CD8-positive, alpha-beta memory T cell (primary cell): ENCODE measurements at regions of chr15 and their contacts with region 1.

Region 1: DNA sequence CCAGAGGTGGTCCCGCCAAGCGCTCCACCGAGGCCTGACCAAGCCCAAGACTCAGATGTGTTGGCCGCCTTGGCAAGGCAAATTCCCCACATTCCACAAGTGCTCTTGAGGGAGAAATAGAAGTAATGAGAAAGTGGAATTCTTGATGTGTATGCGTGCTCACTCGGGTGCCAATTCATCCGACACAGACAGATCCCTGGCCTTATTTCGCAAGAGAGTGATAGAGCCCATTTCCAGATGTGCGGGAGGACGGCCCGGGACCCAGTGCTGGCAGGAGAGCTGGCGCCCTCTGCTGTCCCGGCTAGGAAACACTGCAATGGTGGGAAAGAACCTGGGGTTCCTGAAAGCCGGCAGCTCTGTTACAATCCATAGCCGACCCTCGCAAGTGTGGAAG is 76.0 kb downstream of the HMG20A start:
- DNase-seq: peak; percentile 52 to 76 (median 55)
- H3K4me3 ChIP-seq: no peak overlapping the region
- H3K4me3 Mint-ChIP-seq: no peak overlapping the region
- H3K27ac ChIP-seq: no peak overlapping the region
- H3K27ac Mint-ChIP-seq: no peak overlapping the region
- H3K4me1 ChIP-seq: peaks cover 16% of the 10 kb centered on the region
- H3K4me1 Mint-ChIP-seq: peaks cover 14 to 25% (median 20%) of the 10 kb centered on the region in 3 donors
- H3K27me3 ChIP-seq: no peaks in the 10 kb centered on the region
- H3K27me3 Mint-ChIP-seq: no peaks in the 10 kb centered on the region

Region 2: DNA sequence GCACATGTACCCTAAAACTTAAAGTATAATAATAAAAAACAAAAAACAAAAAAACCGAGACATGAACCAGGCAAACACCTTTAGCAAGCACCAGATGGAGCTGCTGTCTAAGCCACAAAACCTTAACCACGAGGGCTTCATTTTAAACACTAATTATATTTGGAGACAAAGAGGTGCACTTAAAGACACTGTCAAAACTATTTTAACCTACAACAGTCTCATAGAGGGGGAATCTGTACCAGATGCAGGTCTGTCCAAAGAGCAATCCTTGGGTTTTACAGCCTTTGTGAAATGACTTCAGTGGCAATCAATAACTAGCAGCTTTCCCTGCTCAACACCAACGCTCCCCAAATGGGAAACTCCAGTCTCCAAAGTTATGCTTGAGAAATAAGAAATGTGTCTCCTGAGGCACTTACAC is 310.1 kb before region 1 on chr15:
- CTCF ChIA-PET with region 1: interaction called, 23 read pairs
- POLR2A ChIA-PET with region 1: interaction called, 3 read pairs
- DNase-seq: peak in 1 of 5 donors; percentile 48
- H3K4me3 ChIP-seq: no peak overlapping the region
- H3K4me3 Mint-ChIP-seq: peak overlapping the region in 1 of 7 donors; percentile 4
- H3K27ac ChIP-seq: no peak overlapping the region
- H3K27ac Mint-ChIP-seq: peak overlapping the region in 3 of 8 donors; percentile 2 to 54 (median 54)
- H3K4me1 ChIP-seq: peaks cover 29% of the 10 kb centered on the region
- H3K4me1 Mint-ChIP-seq: peaks cover 36 to 61% (median 48%) of the 10 kb centered on the region in 3 donors
- H3K27me3 ChIP-seq: no peaks in the 10 kb centered on the region
- H3K27me3 Mint-ChIP-seq: no peaks in the 10 kb centered on the region

Region 3: GRCh38 chr15:77543159-77543882 is 46.6 kb after region 1 on chr15:
- CTCF ChIA-PET with region 1: interaction called, 18 read pairs
- POLR2A ChIA-PET with region 1: no interaction called
- DNase-seq: peak; percentile 57 to 80 (median 63)
- H3K4me3 ChIP-seq: peak overlapping the region; percentile 77
- H3K4me3 Mint-ChIP-seq: peak overlapping the region; percentile 70 to 92 (median 79)
- H3K27ac ChIP-seq: peak overlapping the region; percentile 43
- H3K27ac Mint-ChIP-seq: peak overlapping the region in 4 of 8 donors; percentile 15 to 73 (median 42)
- H3K4me1 ChIP-seq: peaks cover 13% of the 10 kb centered on the region
- H3K4me1 Mint-ChIP-seq: peaks cover 0 to 18% (median 4%) of the 10 kb centered on the region in 3 donors
- H3K27me3 ChIP-seq: no peaks in the 10 kb centered on the region
- H3K27me3 Mint-ChIP-seq: peaks cover under 1 to 3% of the 10 kb centered on the region in 2 donors